ENCODE measurements at regions of chr3 and their contacts with region 1.

Region 1: GRCh38 chr3:60169755-60170154 is 1081.5 kb downstream of the FHIT start:
- DNase-seq: no peak
- ATAC-seq: no peak
- H3K4me3 ChIP-seq: no peak overlapping the region
- H3K27ac ChIP-seq: no peak overlapping the region
- H3K4me1 ChIP-seq: no peaks in the 10 kb centered on the region
- H3K27me3 ChIP-seq: no peaks in the 10 kb centered on the region
- CTCF ChIP-seq: no peak

Region 2: GRCh38 chr3:59135096-59135495 is 1034.7 kb before region 1 on chr3:
- intact Hi-C with region 1: loop called in 1 of 2 experiments (anchors 5 kb)
- DNase-seq: no peak
- ATAC-seq: no peak
- H3K4me3 ChIP-seq: no peak overlapping the region
- H3K27ac ChIP-seq: no peak overlapping the region
- H3K4me1 ChIP-seq: no peaks in the 10 kb centered on the region
- H3K27me3 ChIP-seq: no peaks in the 10 kb centered on the region
- CTCF ChIP-seq: no peak

Region 3: DNA sequence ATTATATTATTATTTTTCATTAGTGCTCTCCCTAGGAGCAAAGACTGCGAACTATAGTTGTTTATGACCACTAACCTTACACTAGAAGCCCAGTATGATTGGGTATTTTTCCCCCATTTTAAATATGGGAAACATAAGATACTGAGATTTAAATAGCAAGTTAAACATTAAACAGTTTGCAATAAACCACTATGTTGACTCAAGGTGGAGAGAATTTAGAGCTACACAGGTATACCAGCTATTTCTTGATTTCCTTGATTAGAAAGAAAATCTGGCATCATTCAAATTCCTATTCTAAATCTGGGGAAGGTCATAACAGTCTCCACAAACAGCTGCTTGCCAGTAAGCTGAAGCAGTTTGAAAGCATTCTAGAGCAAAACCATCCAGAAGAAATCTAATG is 256.1 kb before region 1 on chr3:
- intact Hi-C with region 1: no loop called
- DNase-seq: no peak
- ATAC-seq: no peak
- H3K4me3 ChIP-seq: no peak overlapping the region
- H3K27ac ChIP-seq: no peak overlapping the region
- H3K4me1 ChIP-seq: no peaks in the 10 kb centered on the region
- H3K27me3 ChIP-seq: no peaks in the 10 kb centered on the region
- CTCF ChIP-seq: no peak

Region 4: DNA sequence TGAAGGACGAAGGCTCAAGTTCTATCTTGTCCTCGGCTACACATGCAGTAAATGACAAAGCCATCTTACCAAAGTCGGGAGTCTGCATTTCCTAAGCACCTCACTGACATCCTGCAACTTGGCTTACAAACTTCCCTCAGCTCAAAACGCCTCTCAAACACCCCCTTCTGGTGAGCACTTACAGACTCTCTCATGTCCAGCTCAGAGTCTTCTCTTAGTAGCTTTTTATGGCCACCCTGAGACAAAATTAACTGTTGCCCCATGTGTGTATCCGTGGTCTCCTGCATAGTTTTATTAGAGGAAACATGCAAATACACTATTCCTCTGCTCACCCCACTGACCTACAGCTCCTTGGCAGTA is 261.8 kb after region 1 on chr3:
- intact Hi-C with region 1: no loop called
- DNase-seq: no peak
- ATAC-seq: no peak
- H3K4me3 ChIP-seq: no peak overlapping the region
- H3K27ac ChIP-seq: no peak overlapping the region
- H3K4me1 ChIP-seq: no peaks in the 10 kb centered on the region
- H3K27me3 ChIP-seq: no peaks in the 10 kb centered on the region
- CTCF ChIP-seq: no peak

Measured in psoas muscle (tissue), 8 donors.